ENCODE measurements at regions of chrX and their contacts with region 1.

Region 1: DNA sequence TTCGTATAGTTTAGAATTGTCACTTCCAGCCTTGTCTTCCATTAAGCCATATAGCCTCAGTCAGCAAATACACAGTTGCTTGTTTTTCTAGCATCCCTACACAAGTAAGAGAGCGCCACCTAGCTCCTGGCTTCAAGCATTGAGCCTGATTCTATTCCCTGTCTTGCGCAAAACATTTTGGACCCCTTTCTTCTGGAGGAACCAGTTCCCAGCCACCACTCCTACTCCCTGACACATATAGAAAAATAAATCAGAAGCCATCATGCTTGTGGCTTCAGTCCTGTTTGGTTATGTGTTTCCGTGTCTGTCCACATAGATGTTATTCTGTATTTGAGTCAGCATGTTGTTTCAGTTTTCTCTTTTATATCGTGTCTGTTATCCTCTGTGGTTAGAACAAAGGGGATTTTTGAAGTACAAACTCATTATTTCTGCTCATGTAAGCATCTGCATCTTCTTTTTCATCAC is 59.9 kb downstream of the GK start:
- DNase-seq: peak; percentile 63
- ATAC-seq: peak; percentile 65

Region 2: GRCh38 chrX:30275498-30275897 is 437.6 kb before region 1 on chrX:
- intact Hi-C with region 1: no loop called
- DNase-seq: no peak
- ATAC-seq: no peak

Region 3: GRCh38 chrX:30568136-30568535 is 145.0 kb before region 1 on chrX:
- intact Hi-C with region 1: loop called (anchors 10 kb)
- DNase-seq: no peak
- ATAC-seq: no peak

Region 4: GRCh38 chrX:30593435-30594200 is 119.5 kb before region 1 on chrX:
- intact Hi-C with region 1: no loop called
- DNase-seq: no peak
- ATAC-seq: no peak

Region 5: GRCh38 chrX:30741545-30741944 is 28.5 kb after region 1 on chrX:
- intact Hi-C with region 1: loop called (anchors 1 kb)
- DNase-seq: no peak
- ATAC-seq: no peak